B cell (primary cell): ENCODE measurements at regions of chr2 and their contacts with region 1.

Region 1: GRCh38 chr2:112764071-112765044 is at the start of gene CKAP2L:
- DNase-seq: peak; percentile 95
- ATAC-seq: peak; percentile 99
- H3K4me3 ChIP-seq: peak within 1 kb of the TSS; percentile 42 to 96 (median 71)
- H3K4me3 Mint-ChIP-seq: peak within 1 kb of the TSS; percentile 97
- H3K27ac ChIP-seq: peak within 1 kb of the TSS in 1 of 2 donors; percentile 58
- H3K27ac Mint-ChIP-seq: peak within 1 kb of the TSS; percentile 77
- H3K4me1 ChIP-seq: peaks cover 8 to 12% of the 10 kb centered on the region in 2 donors
- H3K4me1 Mint-ChIP-seq: peaks cover 32% of the 10 kb centered on the region
- H3K27me3 ChIP-seq: no peaks in the 10 kb centered on the region
- H3K27me3 Mint-ChIP-seq: no peaks in the 10 kb centered on the region
- CTCF ChIP-seq: no peak
- total RNA-seq, gene CKAP2L: 0.25 TPM in 1 of 2 replicates, not detected in the other

Region 2: GRCh38 chr2:112542123-112542983 is 222.0 kb before region 1 on chr2 and contains the start of gene POLR1B:
- CTCF ChIA-PET with region 1: no interaction called
- POLR2A ChIA-PET with region 1: no interaction called
- intact Hi-C with region 1: loop called (anchors 1 kb)
- DNase-seq: peak; percentile 88
- ATAC-seq: peak; percentile 80
- H3K4me3 ChIP-seq: peak within 1 kb of the TSS; percentile 65 to 99 (median 94)
- H3K4me3 Mint-ChIP-seq: no peak within 1 kb of the TSS
- H3K27ac ChIP-seq: peak within 1 kb of the TSS; percentile 85 to 94
- H3K27ac Mint-ChIP-seq: no peak within 1 kb of the TSS
- H3K4me1 ChIP-seq: peaks cover 15 to 18% of the 10 kb centered on the region in 2 donors
- H3K4me1 Mint-ChIP-seq: peaks cover 15% of the 10 kb centered on the region
- H3K27me3 ChIP-seq: no peaks in the 10 kb centered on the region
- H3K27me3 Mint-ChIP-seq: no peaks in the 10 kb centered on the region
- CTCF ChIP-seq: no peak
- total RNA-seq, gene POLR1B: 32.5 and 34.2 TPM in 2 replicates

Region 3: GRCh38 chr2:112645310-112646101 is 118.9 kb before region 1 on chr2 and contains the start of gene SLC20A1:
- CTCF ChIA-PET with region 1: no interaction called
- POLR2A ChIA-PET with region 1: no interaction called
- intact Hi-C with region 1: loop called (anchors 1 kb)
- DNase-seq: peak; percentile 98
- ATAC-seq: peak; percentile 93
- H3K4me3 ChIP-seq: peak within 1 kb of the TSS; percentile 65 to 98 (median 90)
- H3K4me3 Mint-ChIP-seq: peak within 1 kb of the TSS; percentile 94
- H3K27ac ChIP-seq: peak within 1 kb of the TSS; percentile 90 to 96
- H3K27ac Mint-ChIP-seq: peak within 1 kb of the TSS; percentile 90
- H3K4me1 ChIP-seq: peaks cover 15 to 20% of the 10 kb centered on the region in 2 donors
- H3K4me1 Mint-ChIP-seq: peaks cover 26% of the 10 kb centered on the region
- H3K27me3 ChIP-seq: no peaks in the 10 kb centered on the region
- H3K27me3 Mint-ChIP-seq: no peaks in the 10 kb centered on the region
- CTCF ChIP-seq: peak; percentile 69
- total RNA-seq, gene SLC20A1: 54.9 and 57.1 TPM in 2 replicates

Region 4: DNA sequence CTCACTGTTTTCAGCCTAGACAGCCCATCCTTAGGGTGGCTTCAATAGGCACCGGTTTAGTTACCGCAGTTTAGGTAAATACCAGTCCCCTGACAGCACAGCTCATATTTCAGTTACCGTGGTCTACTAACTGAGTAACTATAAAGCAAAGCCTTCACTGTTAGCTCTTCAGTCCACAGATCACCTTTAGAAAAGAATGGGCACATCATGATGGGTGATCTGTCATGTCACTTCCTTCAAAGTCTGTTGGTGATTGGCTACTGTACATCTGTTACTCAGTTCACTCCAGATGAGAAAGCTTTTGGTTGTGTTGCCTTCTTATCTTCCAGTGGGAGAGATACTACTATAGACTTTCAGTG is 97.6 kb before region 1 on chr2:
- CTCF ChIA-PET with region 1: no interaction called
- POLR2A ChIA-PET with region 1: no interaction called
- intact Hi-C with region 1: no loop called
- DNase-seq: no peak
- ATAC-seq: no peak
- H3K4me3 ChIP-seq: no peak overlapping the region
- H3K4me3 Mint-ChIP-seq: no peak overlapping the region
- H3K27ac ChIP-seq: no peak overlapping the region
- H3K27ac Mint-ChIP-seq: peak overlapping the region; percentile 3
- H3K4me1 ChIP-seq: no peaks in the 10 kb centered on the region
- H3K4me1 Mint-ChIP-seq: peaks cover 1% of the 10 kb centered on the region
- H3K27me3 ChIP-seq: no peaks in the 10 kb centered on the region
- H3K27me3 Mint-ChIP-seq: no peaks in the 10 kb centered on the region
- CTCF ChIP-seq: no peak

Region 5: GRCh38 chr2:112782234-112782799 is 18.0 kb after region 1 on chr2:
- CTCF ChIA-PET with region 1: interaction called, 3 read pairs
- POLR2A ChIA-PET with region 1: no interaction called
- intact Hi-C with region 1: loop called (anchors 2 kb)
- DNase-seq: peak; percentile 42
- ATAC-seq: peak; percentile 78
- H3K4me3 ChIP-seq: no peak overlapping the region
- H3K4me3 Mint-ChIP-seq: peak overlapping the region; percentile 60
- H3K27ac ChIP-seq: peak overlapping the region in 1 of 2 donors; percentile 66
- H3K27ac Mint-ChIP-seq: peak overlapping the region; percentile 83
- H3K4me1 ChIP-seq: peaks cover 20 to 21% of the 10 kb centered on the region in 2 donors
- H3K4me1 Mint-ChIP-seq: peaks cover 37% of the 10 kb centered on the region
- H3K27me3 ChIP-seq: no peaks in the 10 kb centered on the region
- H3K27me3 Mint-ChIP-seq: peaks cover 3% of the 10 kb centered on the region
- CTCF ChIP-seq: no peak